GM12878 (cell line): ENCODE measurements at regions of chr3 and their contacts with region 1.

Region 1: DNA sequence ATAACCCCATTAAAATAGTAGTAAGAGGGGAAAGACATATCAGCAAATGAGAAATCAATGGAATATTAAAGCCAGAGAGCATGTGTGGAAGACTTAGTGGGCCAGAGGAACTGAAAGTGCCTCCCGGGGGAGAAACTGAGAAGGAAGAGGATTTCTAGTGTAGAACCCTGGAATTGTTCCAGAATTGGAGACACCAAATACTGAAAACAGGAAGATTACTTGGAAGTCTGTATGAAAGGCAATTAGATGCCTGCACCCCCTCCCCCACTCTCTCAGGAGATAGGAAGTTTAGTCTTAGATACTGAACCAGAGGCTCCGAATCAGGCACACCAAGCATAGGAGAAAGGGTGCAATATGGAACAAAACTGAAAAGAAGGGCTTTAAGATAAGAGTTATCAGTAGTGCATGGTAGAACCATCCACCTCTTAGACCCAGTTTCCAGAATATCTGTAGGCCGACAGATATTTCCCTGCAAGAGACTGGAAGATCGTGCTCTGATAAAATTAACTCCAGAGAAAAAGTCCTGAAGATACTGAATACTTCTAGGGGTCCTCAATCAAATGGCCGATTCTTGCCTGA is 32.4 kb downstream of the KLHL18 start:
- DNase-seq: no peak
- ATAC-seq: no peak
- H3K4me3 ChIP-seq: no peak overlapping the region
- H3K27ac ChIP-seq: no peak overlapping the region
- H3K4me1 ChIP-seq: peaks cover 8% of the 10 kb centered on the region; the same call in 1 of the 2 replicates
- H3K27me3 ChIP-seq: no peaks in the 10 kb centered on the region
- CTCF ChIP-seq: no peak
- EP300 ChIP-seq: no peak
- POLR2A ChIP-seq: no peak
- RAD21 ChIP-seq: no peak

Region 2: DNA sequence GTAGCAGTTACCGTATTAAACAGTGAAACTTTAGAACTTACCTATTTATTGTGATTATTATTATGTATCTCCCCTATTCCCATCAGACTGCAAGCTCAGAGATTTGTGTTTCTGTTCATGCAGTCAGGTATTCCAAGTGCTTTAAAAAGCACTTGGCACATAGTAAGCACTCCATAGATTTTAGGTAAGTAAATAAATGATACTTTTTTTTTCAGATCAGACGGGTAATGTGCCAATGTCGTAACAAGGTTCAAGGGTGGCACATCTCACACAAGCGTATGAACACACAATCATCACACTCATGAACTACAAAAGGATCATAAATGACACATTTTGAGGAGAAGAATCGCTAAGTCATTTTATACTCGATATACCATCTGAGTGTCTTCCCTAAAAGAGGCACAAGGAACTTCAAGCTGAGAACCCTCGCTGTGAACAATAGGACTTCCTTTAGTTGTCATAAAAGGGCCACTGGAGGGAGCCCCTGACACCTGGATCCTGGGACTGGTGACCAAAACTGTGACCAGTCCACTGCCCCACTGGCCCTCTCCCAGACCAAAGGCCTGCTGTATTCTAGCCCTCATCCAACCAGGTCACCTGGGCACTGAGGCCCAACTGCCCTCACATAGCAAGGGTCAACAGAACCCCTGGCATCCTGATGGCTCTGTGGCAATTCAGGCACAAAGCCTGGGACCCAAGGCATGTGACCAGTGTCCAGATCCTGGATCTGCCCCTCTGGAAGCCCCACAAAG is 64.7 kb before region 1 on chr3:
- CTCF ChIA-PET with region 1: interaction called, 5 read pairs
- POLR2A ChIA-PET with region 1: interaction called, 8 read pairs
- RAD21 ChIA-PET with region 1: interaction called, 6 read pairs
- SMC1A ChIA-PET with region 1: interaction called, 16 read pairs
- in situ Hi-C with region 1: no loop called
- intact Hi-C with region 1: no loop called
- DNase-seq: no peak
- ATAC-seq: peak; percentile 77
- H3K4me3 ChIP-seq: no peak overlapping the region
- H3K27ac ChIP-seq: no peak overlapping the region
- H3K4me1 ChIP-seq: no peaks in the 10 kb centered on the region
- H3K27me3 ChIP-seq: no peaks in the 10 kb centered on the region
- CTCF ChIP-seq: peak; percentile 43 to 59 (median 45); a peak in 5 of 6 replicates
- EP300 ChIP-seq: no peak
- POLR2A ChIP-seq: no peak
- RAD21 ChIP-seq: peak; percentile 51; the same call in 1 of the 2 replicates

Region 3: GRCh38 chr3:47296562-47297302 is 18.4 kb before region 1 on chr3:
- CTCF ChIA-PET with region 1: interaction called, 25 read pairs
- POLR2A ChIA-PET with region 1: interaction called, 27 read pairs
- RAD21 ChIA-PET with region 1: interaction called, 12 read pairs
- SMC1A ChIA-PET with region 1: interaction called, 54 read pairs
- in situ Hi-C with region 1: no loop called
- intact Hi-C with region 1: no loop called
- DNase-seq: no peak
- ATAC-seq: peak; percentile 61
- H3K4me3 ChIP-seq: no peak overlapping the region
- H3K27ac ChIP-seq: peak overlapping the region; percentile 17; the same call in 1 of the 2 replicates
- H3K4me1 ChIP-seq: peaks cover 34% of the 10 kb centered on the region
- H3K27me3 ChIP-seq: no peaks in the 10 kb centered on the region
- CTCF ChIP-seq: no peak
- EP300 ChIP-seq: no peak
- POLR2A ChIP-seq: no peak
- RAD21 ChIP-seq: no peak